Transverse colon (tissue), 4 donors: ENCODE measurements at regions of chr7 and their contacts with region 1.

Region 1: DNA sequence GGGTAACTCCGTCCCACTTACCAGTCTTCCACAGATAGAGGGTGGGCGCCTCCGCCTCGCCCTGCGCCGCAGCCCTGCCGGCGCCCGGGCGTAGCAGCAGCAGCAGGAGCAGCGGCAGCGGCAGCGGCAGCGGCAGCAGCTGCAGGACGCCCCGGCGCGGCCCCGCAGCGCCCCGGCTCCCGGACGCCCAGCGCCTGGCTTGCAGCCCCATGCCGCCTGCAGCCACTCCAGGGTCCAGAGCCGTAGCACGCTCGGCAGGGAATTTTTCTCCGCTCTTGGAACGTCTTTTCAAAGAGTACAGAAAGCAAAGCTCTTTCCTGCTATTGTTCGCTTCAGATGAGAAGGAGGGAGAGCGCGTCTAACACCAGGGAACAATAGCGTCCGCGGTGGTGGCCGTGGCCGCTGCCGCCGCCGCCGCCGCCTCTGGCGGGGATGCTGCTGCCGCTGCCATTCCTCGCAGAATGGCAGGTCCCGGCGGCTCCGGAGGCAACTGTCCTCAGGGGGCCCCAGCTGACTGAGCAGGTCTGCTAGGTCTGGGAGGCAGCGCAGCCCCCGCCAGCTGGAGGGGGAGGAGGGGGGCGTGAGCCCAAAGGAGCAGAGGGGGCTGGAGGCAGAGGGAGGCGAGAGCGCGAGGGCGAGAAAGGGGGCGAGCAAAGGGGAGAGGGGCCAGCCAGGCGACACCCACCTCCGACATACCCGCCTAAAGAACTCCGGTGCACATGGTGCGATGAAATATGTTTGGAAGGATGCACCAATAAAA is at the start of gene THSD7A:
- DNase-seq: peak; percentile 20
- H3K4me3 ChIP-seq: peak within 1 kb of the TSS; percentile 48 to 75 (median 52)
- H3K27ac ChIP-seq: peak within 1 kb of the TSS; percentile 40 to 69 (median 65)
- H3K4me1 ChIP-seq: peaks cover 0 to 17% (median 7%) of the 10 kb centered on the region in 4 donors
- H3K27me3 ChIP-seq: peaks cover 17% of the 10 kb centered on the region
- CTCF ChIP-seq: peak in 2 of 5 experiments; percentile 10 to 17
- EP300 ChIP-seq: no peak
- POLR2A ChIP-seq: no peak
- total RNA-seq, gene THSD7A: 1.9 to 18.9 (median 2.0) TPM

Region 2: DNA sequence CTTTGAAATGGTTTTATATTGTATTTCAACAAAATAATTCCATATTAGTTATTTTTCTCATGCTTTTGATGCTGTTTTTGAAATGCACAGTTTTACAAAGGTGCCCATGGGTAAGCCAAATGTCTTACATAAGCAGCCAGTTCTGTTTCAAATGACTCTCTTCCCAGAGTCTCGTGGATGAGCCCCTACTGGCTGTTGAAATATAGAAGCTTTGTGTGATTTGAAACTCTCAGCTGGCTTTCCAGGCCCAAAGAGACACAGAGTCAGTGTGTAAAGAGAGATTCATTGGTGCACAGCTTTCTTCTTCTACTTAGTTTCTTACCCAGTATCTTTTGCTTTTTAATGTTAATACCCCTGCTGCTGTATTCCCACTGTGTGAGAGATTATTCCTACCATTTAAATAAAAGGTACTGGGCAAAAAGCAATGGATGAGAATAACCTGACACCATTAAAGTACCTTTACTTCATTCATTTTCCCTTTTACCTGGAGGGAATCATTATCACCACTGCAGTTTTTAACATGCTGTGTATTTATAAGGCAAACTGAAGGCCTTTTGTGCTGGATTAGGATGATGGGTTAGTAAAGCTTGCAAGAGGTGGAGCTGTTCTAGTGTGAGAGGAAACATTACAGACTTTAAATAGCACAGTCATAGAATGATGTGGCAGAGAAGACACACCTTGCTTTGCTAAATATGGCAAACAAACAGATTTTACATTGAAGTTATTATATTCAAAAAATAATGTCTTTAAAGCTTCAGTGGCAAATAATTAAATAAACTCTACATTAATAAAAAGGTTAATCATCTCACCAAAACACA is 415.1 kb before region 1 on chr7:
- in situ Hi-C with region 1: loop called in 1 of 4 experiments (anchors 25 kb)
- intact Hi-C with region 1: no loop called
- DNase-seq: no peak
- H3K4me3 ChIP-seq: no peak overlapping the region
- H3K27ac ChIP-seq: no peak overlapping the region
- H3K4me1 ChIP-seq: no peaks in the 10 kb centered on the region
- H3K27me3 ChIP-seq: no peaks in the 10 kb centered on the region
- CTCF ChIP-seq: no peak
- EP300 ChIP-seq: no peak
- POLR2A ChIP-seq: no peak

Region 3: DNA sequence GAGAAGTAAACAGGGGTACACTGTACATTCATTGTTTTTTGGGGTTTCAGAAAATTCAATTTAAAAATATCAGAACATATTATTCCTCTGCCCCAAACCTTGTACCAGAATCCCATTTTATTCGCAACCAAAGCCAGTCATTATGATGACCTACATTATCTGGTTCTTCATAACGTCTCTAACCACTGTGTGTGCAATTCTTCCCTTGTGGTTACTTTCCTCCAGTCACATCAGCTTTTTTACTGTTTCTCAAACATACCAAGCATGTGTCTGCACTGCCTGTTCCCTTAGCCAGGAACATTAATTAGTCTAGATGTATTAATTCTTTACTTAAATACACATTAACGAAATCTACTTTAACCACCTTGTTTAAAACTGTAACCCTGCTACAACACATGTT is 64.8 kb before region 1 on chr7:
- in situ Hi-C with region 1: no loop called
- intact Hi-C with region 1: no loop called
- DNase-seq: no peak
- H3K4me3 ChIP-seq: no peak overlapping the region
- H3K27ac ChIP-seq: no peak overlapping the region
- H3K4me1 ChIP-seq: no peaks in the 10 kb centered on the region
- H3K27me3 ChIP-seq: no peaks in the 10 kb centered on the region
- CTCF ChIP-seq: no peak
- EP300 ChIP-seq: no peak
- POLR2A ChIP-seq: no peak

Region 4: DNA sequence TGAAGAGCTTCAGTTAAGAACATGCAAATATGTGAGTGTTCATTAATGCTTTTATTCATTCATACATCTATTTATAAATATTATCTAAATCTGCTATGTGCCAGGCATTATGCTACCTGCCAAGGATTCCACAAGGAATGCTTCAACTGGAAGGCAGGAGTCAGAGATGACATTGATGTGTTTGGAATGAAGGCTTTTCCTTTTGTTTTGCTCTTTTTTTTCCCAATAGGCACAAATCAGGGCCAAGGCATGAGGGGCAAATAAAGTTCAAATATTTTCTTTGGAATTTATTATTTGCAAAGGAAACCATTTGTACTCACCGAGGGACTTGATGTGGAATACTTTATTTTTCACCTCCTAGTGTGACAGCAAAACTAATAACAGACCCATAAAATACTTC is 1385.9 kb after region 1 on chr7:
- in situ Hi-C with region 1: no loop called
- intact Hi-C with region 1: no loop called
- DNase-seq: no peak
- H3K4me3 ChIP-seq: no peak overlapping the region
- H3K27ac ChIP-seq: no peak overlapping the region
- H3K4me1 ChIP-seq: peaks cover 0 to 5% (median 0%) of the 10 kb centered on the region in 4 donors
- H3K27me3 ChIP-seq: no peaks in the 10 kb centered on the region
- CTCF ChIP-seq: no peak
- EP300 ChIP-seq: no peak
- POLR2A ChIP-seq: no peak